CD4-positive, alpha-beta T cell (primary cell): ENCODE measurements at regions of chr15 and their contacts with region 1.

Region 1: DNA sequence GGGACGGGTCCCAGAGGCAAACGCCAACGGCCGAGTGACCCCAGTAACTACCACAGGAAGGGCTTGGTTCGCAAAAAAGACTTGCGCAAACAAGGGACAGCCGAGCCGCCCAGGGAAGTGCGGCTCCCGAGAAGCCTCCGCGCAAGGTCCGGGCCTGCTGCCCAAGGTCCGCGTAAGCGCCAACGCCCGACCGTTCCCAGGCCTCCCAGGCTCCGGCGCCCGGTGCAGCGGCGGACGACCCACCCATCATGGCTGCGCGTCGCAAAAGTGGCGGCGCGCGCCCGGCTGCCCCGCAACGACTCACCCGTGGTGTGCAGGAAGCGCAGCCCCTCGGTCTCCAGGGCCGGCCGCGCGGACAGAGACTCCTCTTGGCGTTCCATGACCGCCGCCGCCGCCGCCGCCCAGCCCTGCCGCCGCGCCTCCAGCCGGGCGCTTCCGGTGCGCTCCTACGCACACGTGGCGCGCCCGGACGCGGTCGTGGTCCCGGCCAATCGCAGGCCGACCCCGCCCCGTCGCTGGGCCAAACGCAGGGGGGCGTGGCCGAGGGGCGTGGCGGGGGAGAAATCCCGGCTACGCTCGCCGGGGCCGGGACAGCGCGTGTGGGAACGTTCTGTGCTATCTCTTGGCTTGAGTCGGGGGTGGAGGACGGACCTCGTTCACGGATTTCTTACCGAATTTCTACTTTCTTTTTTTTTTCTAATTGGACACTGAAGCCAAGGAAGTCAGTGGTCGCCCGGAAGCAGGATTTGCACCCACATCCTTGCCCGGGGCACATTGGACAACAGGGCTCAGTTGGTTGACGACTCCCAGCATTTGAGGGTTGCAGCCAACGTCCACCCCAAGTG is at the start of gene SELENOS:
- DNase-seq: peak; percentile 68 to 95 (median 84)
- ATAC-seq: peak; percentile 96
- H3K4me3 ChIP-seq: peak within 1 kb of the TSS; percentile 92
- H3K4me3 Mint-ChIP-seq: peak within 1 kb of the TSS; percentile 97
- H3K27ac ChIP-seq: peak within 1 kb of the TSS; percentile 56 to 58
- H3K27ac Mint-ChIP-seq: peak within 1 kb of the TSS; percentile 95
- H3K4me1 ChIP-seq: peaks cover 23% of the 10 kb centered on the region
- H3K4me1 Mint-ChIP-seq: peaks cover 24% of the 10 kb centered on the region
- H3K27me3 ChIP-seq: no peaks in the 10 kb centered on the region
- H3K27me3 Mint-ChIP-seq: no peaks in the 10 kb centered on the region
- CTCF ChIP-seq: no peak
- total RNA-seq, gene SELENOS: 41.7 to 48.5 TPM

Region 2: DNA sequence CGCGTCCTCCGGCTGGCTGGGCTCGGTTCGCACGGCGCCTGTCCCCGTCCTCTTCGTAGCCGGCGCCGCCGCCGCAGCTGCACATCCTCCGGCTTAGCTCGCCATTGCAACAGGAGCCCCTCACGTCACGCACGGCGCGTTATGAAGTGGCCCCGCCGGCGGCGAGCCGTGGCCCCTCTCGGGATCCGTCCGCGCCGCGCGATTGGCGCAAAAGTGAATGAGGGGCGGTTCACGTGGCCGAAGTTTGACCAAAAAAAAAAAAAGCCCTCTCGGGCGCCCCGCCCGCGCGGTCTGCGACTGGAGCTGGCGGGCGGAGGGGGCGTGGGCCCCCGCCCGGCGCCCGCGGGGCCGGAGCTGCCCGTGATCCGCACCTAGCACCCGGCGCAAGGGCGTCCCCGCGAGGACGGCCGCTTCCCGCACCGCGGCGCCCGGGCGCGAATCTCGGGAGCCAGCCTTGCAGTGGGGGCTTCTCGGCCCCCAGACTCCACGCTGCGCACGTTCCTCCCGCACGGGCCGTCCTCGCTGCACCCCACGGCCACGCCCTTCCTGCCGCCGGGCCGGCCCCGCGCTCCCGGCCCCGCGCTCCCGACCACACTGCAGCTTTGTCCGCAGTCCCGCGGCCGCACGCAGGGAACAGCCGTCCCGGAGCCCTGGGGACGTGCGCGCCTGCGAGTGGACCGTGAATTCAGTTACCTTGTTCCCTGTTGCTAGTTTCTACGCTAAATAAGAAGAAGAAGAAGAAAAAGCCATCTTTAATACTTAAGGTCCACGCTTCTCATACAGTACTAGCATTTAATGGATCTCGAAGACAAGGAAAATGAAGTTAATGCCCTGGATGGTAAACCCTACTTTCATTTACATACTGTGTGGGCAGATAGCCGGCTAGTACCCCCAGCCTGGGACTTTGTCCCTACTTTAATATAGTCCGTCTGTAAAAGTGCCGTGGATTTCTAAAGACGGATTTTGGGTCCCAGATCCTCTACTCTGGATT is 25.1 kb before region 1 on chr15 and contains the start of gene CHSY1:
- CTCF ChIA-PET with region 1: no interaction called
- POLR2A ChIA-PET with region 1: interaction called, 6 read pairs
- intact Hi-C with region 1: loop called in 1 of 2 experiments (anchors 2 kb)
- DNase-seq: peak; percentile 61 to 93 (median 76)
- ATAC-seq: peak; percentile 75
- H3K4me3 ChIP-seq: peak within 1 kb of the TSS; percentile 66
- H3K4me3 Mint-ChIP-seq: peak within 1 kb of the TSS; percentile 100
- H3K27ac ChIP-seq: no peak within 1 kb of the TSS
- H3K27ac Mint-ChIP-seq: peak within 1 kb of the TSS; percentile 89
- H3K4me1 ChIP-seq: peaks cover 25% of the 10 kb centered on the region
- H3K4me1 Mint-ChIP-seq: peaks cover 38% of the 10 kb centered on the region
- H3K27me3 ChIP-seq: no peaks in the 10 kb centered on the region
- H3K27me3 Mint-ChIP-seq: no peaks in the 10 kb centered on the region
- CTCF ChIP-seq: no peak
- total RNA-seq, gene CHSY1: 5.8 to 6.7 TPM

Region 3: GRCh38 chr15:101333401-101333800 is 56.1 kb after region 1 on chr15:
- CTCF ChIA-PET with region 1: no interaction called
- POLR2A ChIA-PET with region 1: no interaction called
- intact Hi-C with region 1: loop called in 1 of 2 experiments (anchors 2 kb)
- DNase-seq: peak in 1 of 14 experiments; percentile 11
- ATAC-seq: no peak
- H3K4me3 ChIP-seq: no peak overlapping the region
- H3K4me3 Mint-ChIP-seq: no peak overlapping the region
- H3K27ac ChIP-seq: peak overlapping the region; percentile 76 to 84
- H3K27ac Mint-ChIP-seq: peak overlapping the region; percentile 90
- H3K4me1 ChIP-seq: peaks cover 25% of the 10 kb centered on the region
- H3K4me1 Mint-ChIP-seq: peaks cover 14% of the 10 kb centered on the region
- H3K27me3 ChIP-seq: peaks cover 4 to 8% of the 10 kb centered on the region in 2 experiments
- H3K27me3 Mint-ChIP-seq: peaks cover 21% of the 10 kb centered on the region
- CTCF ChIP-seq: no peak